ENCODE measurements at regions of chr11 and their contacts with region 1.

Region 1: GRCh38 chr11:119205574-119206510 is at the start of gene CBL:
- DNase-seq: peak; percentile 98
- total RNA-seq, gene CBL: 13.4 TPM

Region 2: GRCh38 chr11:119168471-119169281 is 37.2 kb before region 1 on chr11 and contains the start of gene NLRX1:
- intact Hi-C with region 1: loop called (anchors 2 kb)
- DNase-seq: peak; percentile 95
- total RNA-seq, gene NLRX1: 25.4 TPM

Region 3: DNA sequence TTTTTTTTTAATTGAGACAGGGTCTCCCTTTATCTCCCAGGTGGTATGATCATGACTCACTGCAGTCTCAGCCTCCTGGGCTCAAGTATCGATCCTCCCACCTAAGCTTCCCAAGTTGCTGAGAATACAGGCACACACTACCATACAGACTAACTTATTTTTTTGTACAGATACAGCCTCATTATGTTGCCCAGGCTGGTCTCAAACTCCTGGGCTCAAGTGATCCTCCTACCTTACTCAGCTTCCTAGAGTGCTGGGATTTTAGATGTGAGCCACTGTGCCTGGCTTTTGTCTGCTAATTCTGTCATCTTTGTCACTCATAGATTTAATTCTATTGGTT is 43.8 kb after region 1 on chr11:
- intact Hi-C with region 1: no loop called
- DNase-seq: no peak

Region 4: DNA sequence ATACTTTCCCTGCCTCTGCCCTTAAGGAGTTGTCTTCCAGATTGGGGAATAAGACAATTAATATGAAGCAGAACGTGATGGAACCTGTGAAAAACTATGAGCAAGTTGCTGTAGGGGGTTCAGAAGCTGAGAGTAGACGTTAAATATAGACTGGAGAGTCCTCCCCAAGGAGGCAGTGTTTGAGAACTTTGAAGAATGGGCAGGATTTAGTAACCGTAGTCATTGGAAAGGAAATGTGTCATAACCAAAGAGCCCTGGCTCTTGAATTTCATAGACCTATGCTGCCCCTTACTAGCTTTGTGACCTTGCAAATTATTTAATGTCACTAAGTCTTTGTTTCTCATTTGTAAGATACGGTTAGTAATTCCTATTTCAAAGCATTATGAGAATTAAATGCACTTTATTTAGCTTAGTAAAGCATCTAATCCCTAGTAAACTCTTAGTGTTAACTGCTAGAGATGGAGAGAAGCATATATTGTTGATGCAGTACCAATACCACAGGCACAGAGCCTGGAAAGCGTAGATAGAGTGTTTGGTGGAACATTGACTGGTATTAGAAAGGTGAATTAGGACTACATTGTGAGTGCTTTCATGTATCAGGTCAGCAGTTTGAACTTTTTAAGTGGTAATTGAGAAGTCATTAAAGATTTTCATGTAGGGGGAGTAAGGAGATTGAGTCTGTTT is 57.0 kb after region 1 on chr11:
- intact Hi-C with region 1: loop called (anchors 5 kb)
- DNase-seq: no peak

Region 5: DNA sequence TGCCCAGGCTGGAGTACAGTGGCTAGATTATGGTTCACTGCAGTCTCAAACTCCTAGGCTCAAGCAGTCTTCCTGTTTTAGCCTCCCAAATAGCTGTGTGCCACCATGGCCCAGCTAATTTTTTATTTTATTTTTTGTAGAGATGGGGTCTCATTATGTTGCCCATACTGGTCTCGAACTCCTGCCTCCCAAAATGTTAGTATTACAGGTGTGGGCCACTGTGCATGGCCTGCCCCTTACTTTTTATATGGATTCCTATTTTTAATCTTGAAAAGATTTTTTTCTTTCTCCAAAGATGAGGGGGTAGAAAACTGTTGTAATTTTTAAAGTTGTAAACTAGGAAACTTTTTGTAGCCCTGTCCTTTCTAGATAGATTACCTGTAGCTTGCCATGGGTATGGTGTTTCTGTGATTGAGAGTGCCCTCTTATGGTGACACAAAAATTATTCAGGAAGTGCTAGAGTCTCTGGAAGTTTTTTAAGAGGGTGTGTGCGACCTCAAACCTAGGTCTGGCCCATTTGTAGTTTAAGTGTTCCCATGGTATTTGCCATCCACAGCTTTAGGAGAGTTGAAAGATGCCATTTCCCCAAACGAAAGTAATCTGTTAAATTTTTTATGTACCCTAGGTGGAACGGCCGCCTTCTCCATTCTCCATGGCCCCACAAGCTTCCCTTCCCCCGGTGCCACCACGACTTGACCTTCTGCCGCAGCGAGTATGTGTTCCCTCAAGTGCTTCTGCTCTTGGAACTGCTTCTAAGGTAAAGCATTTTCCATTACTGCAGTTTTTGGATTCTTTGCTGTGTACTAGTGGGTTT is 78.7 kb after region 1 on chr11:
- intact Hi-C with region 1: loop called (anchors 5 kb)
- DNase-seq: no peak

Region 6: GRCh38 chr11:119315131-119316015 is 109.5 kb after region 1 on chr11:
- intact Hi-C with region 1: loop called (anchors 5 kb)
- DNase-seq: no peak

Region 7: GRCh38 chr11:119329320-119329719 is 123.5 kb after region 1 on chr11:
- intact Hi-C with region 1: no loop called
- DNase-seq: no peak

Measured in cardiac septum (tissue), 1 donor.